ENCODE measurements at regions of chr2 and their contacts with region 1.

Region 1: GRCh38 chr2:238466243-238466756 is 39.6 kb downstream of the ASB1 start:
- DNase-seq: peak in 1 of 4 donors; percentile 51
- ATAC-seq: no peak
- H3K4me3 ChIP-seq: no peak overlapping the region
- H3K27ac ChIP-seq: no peak overlapping the region
- H3K4me1 ChIP-seq: no peaks in the 10 kb centered on the region
- H3K27me3 ChIP-seq: no peaks in the 10 kb centered on the region
- CTCF ChIP-seq: no peak

Region 2: DNA sequence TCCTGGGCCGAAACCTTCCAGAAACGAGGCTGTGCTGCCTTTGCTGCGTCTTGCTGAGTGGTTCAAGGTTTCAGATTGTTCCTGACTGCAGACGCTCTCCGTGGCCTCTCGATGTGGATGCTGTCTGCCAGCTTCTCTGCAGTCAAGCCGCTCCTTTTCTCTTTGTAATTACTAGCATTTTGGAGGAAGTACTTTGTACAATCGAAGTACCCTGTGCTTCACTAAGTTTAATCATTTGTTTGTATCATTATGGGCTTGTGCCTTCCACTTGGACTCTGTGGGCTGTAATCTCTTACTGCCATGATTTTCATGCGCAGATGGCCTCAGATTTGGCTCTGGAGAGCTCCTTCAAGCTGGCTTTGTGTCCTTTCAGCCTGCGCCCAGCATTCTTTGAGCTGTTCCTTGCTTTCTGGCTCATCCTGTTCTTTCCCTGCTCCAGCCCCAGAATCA is 96.7 kb before region 1 on chr2:
- intact Hi-C with region 1: loop called in 1 of 2 experiments (anchors 5 kb)
- DNase-seq: no peak
- ATAC-seq: no peak
- H3K4me3 ChIP-seq: no peak overlapping the region
- H3K27ac ChIP-seq: no peak overlapping the region
- H3K4me1 ChIP-seq: peaks cover 0 to 8% of the 10 kb centered on the region in 2 donors
- H3K27me3 ChIP-seq: no peaks in the 10 kb centered on the region
- CTCF ChIP-seq: no peak

Measured in left lung (tissue), 14 donors.